ENCODE measurements at regions of chr5 and their contacts with region 1.

Region 1: DNA sequence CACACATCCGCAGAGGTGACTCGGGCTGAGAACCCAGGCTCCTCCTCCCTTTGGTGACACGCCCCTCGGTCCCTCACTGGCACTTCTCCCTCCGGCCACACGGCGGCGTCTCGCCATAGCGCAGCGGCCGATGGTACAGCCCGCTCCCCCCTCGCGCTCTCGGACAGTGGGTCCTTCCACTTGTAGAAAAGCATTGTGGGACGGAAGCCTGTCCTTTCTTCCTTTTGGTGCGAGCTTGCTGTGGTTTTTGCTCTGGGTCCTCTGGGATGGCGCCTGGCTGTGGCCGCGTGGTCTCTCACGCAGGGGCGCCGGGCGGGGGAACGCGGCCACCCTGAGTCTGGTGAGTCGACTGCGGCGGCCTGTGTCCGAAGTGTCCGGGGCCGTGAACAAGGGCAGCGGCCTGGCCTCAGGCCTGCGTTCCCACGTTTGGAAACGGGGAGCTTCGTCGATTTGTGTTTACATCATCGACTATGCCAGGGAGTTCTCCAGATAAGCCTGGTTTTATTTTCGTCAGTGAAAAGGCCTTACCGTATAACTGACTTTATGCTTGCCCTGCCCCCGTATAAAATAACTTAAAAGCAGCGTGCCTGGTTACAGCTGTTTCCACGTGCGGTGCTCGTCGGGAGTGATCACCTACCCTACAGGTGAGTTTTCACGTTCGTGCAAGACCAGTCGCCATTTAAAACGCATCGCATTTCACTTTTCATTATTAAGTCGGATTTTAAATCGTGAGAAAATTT is 258.3 kb downstream of the EPB41L4A start:
- DNase-seq: peak; percentile 85 to 96 (median 91)
- ATAC-seq: peak; percentile 96
- H3K4me3 ChIP-seq: peak overlapping the region; percentile 94
- H3K4me3 Mint-ChIP-seq: peak overlapping the region; percentile 91
- H3K27ac ChIP-seq: peak overlapping the region; percentile 70 to 72
- H3K27ac Mint-ChIP-seq: peak overlapping the region; percentile 73
- H3K4me1 ChIP-seq: peaks cover 16% of the 10 kb centered on the region
- H3K4me1 Mint-ChIP-seq: peaks cover 21% of the 10 kb centered on the region
- H3K27me3 ChIP-seq: no peaks in the 10 kb centered on the region
- H3K27me3 Mint-ChIP-seq: no peaks in the 10 kb centered on the region
- CTCF ChIP-seq: peak; percentile 96

Region 2: DNA sequence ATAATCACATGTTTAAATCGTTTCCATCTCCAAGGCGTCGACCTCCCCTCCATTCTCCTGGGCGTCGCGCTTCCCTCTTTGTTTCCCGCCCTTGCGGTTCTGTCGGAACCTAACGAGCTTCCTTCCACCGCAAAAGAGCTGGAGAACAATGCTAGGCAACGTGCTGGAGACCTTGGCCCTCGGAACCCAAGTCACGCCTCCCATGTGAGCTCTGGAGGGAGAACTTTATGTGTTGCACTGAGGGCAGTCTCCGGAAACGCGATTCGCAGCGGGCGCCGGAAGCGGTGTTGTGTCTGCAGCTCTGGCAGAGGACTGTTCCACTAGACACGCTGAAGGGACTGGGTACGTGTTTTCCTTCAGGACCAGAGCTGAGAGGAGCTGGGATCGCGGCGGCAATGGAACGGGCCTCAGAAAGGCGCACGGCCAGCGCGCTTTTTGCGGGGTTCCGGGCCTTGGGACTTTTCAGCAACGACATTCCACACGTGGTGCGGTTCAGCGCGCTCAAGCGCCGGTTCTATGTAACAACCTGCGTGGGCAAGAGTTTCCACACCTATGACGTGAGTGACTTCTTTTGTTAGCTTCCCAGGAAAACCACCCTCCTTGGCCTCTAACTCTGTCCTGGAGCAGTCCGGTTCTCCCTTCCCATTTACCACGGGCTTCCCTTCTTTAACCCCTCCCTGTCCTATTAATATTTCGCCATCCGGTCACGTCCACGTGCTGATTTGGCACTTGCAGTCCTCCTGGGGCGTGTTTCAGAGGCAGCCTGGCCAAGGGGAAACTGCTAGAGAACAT is 1068.6 kb before region 1 on chr5 and contains the start of gene WDR36:
- CTCF ChIA-PET with region 1: no interaction called
- POLR2A ChIA-PET with region 1: interaction called, 7 read pairs
- intact Hi-C with region 1: loop called in 1 of 2 experiments (anchors 2 kb)
- DNase-seq: peak; percentile 78 to 93 (median 86)
- ATAC-seq: peak; percentile 93
- H3K4me3 ChIP-seq: peak within 1 kb of the TSS; percentile 89
- H3K4me3 Mint-ChIP-seq: peak within 1 kb of the TSS; percentile 90
- H3K27ac ChIP-seq: peak within 1 kb of the TSS; percentile 68 to 85
- H3K27ac Mint-ChIP-seq: peak within 1 kb of the TSS; percentile 94
- H3K4me1 ChIP-seq: peaks cover 9% of the 10 kb centered on the region
- H3K4me1 Mint-ChIP-seq: peaks cover 41% of the 10 kb centered on the region
- H3K27me3 ChIP-seq: no peaks in the 10 kb centered on the region
- H3K27me3 Mint-ChIP-seq: peaks cover 9% of the 10 kb centered on the region
- CTCF ChIP-seq: no peak
- total RNA-seq, gene WDR36: 22.0 to 22.4 TPM

Region 3: GRCh38 chr5:111757355-111758283 is 403.2 kb before region 1 on chr5:
- CTCF ChIA-PET with region 1: no interaction called
- POLR2A ChIA-PET with region 1: interaction called, 7 read pairs
- intact Hi-C with region 1: loop called (anchors 2 to 5 kb)
- DNase-seq: peak; percentile 46 to 87 (median 75)
- ATAC-seq: peak; percentile 79
- H3K4me3 ChIP-seq: peak overlapping the region; percentile 67
- H3K4me3 Mint-ChIP-seq: peak overlapping the region; percentile 94
- H3K27ac ChIP-seq: peak overlapping the region in 1 of 2 donors; percentile 16
- H3K27ac Mint-ChIP-seq: peak overlapping the region; percentile 79
- H3K4me1 ChIP-seq: peaks cover 5% of the 10 kb centered on the region
- H3K4me1 Mint-ChIP-seq: peaks cover 28% of the 10 kb centered on the region
- H3K27me3 ChIP-seq: no peaks in the 10 kb centered on the region
- H3K27me3 Mint-ChIP-seq: no peaks in the 10 kb centered on the region
- CTCF ChIP-seq: no peak

Region 4: GRCh38 chr5:112174959-112175594 is 14.3 kb after region 1 on chr5:
- CTCF ChIA-PET with region 1: interaction called, 13 read pairs
- POLR2A ChIA-PET with region 1: interaction called, 6 read pairs
- intact Hi-C with region 1: no loop called
- DNase-seq: peak in 6 of 14 experiments; percentile 1 to 70 (median 46)
- ATAC-seq: peak; percentile 56
- H3K4me3 ChIP-seq: no peak overlapping the region
- H3K4me3 Mint-ChIP-seq: no peak overlapping the region
- H3K27ac ChIP-seq: no peak overlapping the region
- H3K27ac Mint-ChIP-seq: no peak overlapping the region
- H3K4me1 ChIP-seq: peaks cover 3% of the 10 kb centered on the region
- H3K4me1 Mint-ChIP-seq: no peaks in the 10 kb centered on the region
- H3K27me3 ChIP-seq: no peaks in the 10 kb centered on the region
- H3K27me3 Mint-ChIP-seq: peaks cover 14% of the 10 kb centered on the region
- CTCF ChIP-seq: peak; percentile 75

Region 5: DNA sequence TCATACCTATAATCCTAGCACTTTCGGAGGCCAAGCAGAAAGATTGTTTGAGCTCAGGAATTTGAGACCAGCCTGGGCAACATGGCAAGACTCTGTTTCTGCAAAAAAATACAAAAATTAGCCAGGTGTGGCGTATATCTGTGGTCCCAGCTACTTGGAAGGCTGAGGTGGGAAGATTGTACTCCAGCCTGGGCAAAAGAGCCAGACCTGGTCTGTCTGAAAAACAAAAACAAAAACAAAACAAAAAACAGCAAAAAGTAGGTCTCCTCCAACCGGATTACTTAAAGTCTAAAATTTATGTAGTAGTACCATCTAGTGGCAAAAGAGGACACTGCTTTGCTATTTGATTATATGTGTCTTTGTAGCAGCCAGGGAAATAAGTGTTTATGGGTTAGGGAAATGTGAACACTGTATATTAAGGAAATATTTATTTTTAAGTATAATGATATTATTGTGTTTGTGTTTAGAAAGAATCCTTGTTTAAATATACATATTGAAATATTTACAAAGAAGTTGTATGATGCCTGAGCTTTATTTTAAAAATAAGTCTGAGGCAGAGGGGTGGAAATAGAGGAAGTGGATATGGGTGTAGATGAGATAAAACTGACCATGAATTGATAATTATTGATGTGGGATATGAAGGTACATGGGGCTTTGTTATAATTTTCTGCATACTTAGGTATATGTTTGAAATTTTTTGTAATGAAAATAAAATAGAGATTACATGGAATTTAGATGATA is 596.8 kb after region 1 on chr5:
- CTCF ChIA-PET with region 1: no interaction called
- POLR2A ChIA-PET with region 1: no interaction called
- intact Hi-C with region 1: loop called in 1 of 2 experiments (anchors 5 kb)
- DNase-seq: peak in 3 of 14 experiments; percentile 74 to 76 (median 75)
- ATAC-seq: peak; percentile 84
- H3K4me3 ChIP-seq: no peak overlapping the region
- H3K4me3 Mint-ChIP-seq: no peak overlapping the region
- H3K27ac ChIP-seq: no peak overlapping the region
- H3K27ac Mint-ChIP-seq: peak overlapping the region; percentile 60
- H3K4me1 ChIP-seq: peaks cover 3% of the 10 kb centered on the region
- H3K4me1 Mint-ChIP-seq: peaks cover 25% of the 10 kb centered on the region
- H3K27me3 ChIP-seq: no peaks in the 10 kb centered on the region
- H3K27me3 Mint-ChIP-seq: no peaks in the 10 kb centered on the region
- CTCF ChIP-seq: peak; percentile 84

Measured in CD4-positive, alpha-beta T cell (primary cell).